Activated CD4-positive, alpha-beta memory T cell treated with anti-CD3 and anti-CD28 coated beads for 36 hours (primary cell): ENCODE measurements at regions of chr22 and their contacts with region 1.

Region 1: GRCh38 chr22:26690654-26691376 is 33.4 kb downstream of the MIAT start:
- DNase-seq: no peak
- H3K4me3 Mint-ChIP-seq: no peak overlapping the region
- H3K27ac Mint-ChIP-seq: no peak overlapping the region
- H3K4me1 Mint-ChIP-seq: peaks cover 53% of the 10 kb centered on the region
- H3K27me3 Mint-ChIP-seq: no peaks in the 10 kb centered on the region

Region 2: GRCh38 chr22:26610072-26610958 is 80.5 kb before region 1 on chr22:
- CTCF ChIA-PET with region 1: no interaction called
- POLR2A ChIA-PET with region 1: no interaction called
- intact Hi-C with region 1: no loop called
- DNase-seq: peak; percentile 80
- H3K4me3 Mint-ChIP-seq: no peak overlapping the region
- H3K27ac Mint-ChIP-seq: peak overlapping the region; percentile 50
- H3K4me1 Mint-ChIP-seq: peaks cover 21% of the 10 kb centered on the region
- H3K27me3 Mint-ChIP-seq: no peaks in the 10 kb centered on the region

Region 3: GRCh38 chr22:26679003-26679629 is 11.7 kb before region 1 on chr22:
- CTCF ChIA-PET with region 1: interaction called, 12 read pairs
- POLR2A ChIA-PET with region 1: no interaction called
- intact Hi-C with region 1: no loop called
- DNase-seq: peak; percentile 87
- H3K4me3 Mint-ChIP-seq: no peak overlapping the region
- H3K27ac Mint-ChIP-seq: no peak overlapping the region
- H3K4me1 Mint-ChIP-seq: peaks cover 42% of the 10 kb centered on the region
- H3K27me3 Mint-ChIP-seq: no peaks in the 10 kb centered on the region

Region 4: GRCh38 chr22:26783891-26784290 is 93.1 kb after region 1 on chr22:
- CTCF ChIA-PET with region 1: no interaction called
- POLR2A ChIA-PET with region 1: no interaction called
- intact Hi-C with region 1: no loop called
- DNase-seq: no peak
- H3K4me3 Mint-ChIP-seq: no peak overlapping the region
- H3K27ac Mint-ChIP-seq: no peak overlapping the region
- H3K4me1 Mint-ChIP-seq: no peaks in the 10 kb centered on the region
- H3K27me3 Mint-ChIP-seq: no peaks in the 10 kb centered on the region